ENCODE measurements at regions of chr7 and their contacts with region 1.

Region 1: GRCh38 chr7:57651006-57651405 is 201.0 kb downstream of the ZNF716 start:
- DNase-seq: no peak
- ATAC-seq: no peak
- H3K4me3 ChIP-seq: no peak overlapping the region
- H3K27ac ChIP-seq: no peak overlapping the region
- H3K4me1 ChIP-seq: no peaks in the 10 kb centered on the region
- H3K27me3 ChIP-seq: no peaks in the 10 kb centered on the region
- CTCF ChIP-seq: no peak
- POLR2A ChIP-seq: no peak
- RAD21 ChIP-seq: no peak

Region 2: DNA sequence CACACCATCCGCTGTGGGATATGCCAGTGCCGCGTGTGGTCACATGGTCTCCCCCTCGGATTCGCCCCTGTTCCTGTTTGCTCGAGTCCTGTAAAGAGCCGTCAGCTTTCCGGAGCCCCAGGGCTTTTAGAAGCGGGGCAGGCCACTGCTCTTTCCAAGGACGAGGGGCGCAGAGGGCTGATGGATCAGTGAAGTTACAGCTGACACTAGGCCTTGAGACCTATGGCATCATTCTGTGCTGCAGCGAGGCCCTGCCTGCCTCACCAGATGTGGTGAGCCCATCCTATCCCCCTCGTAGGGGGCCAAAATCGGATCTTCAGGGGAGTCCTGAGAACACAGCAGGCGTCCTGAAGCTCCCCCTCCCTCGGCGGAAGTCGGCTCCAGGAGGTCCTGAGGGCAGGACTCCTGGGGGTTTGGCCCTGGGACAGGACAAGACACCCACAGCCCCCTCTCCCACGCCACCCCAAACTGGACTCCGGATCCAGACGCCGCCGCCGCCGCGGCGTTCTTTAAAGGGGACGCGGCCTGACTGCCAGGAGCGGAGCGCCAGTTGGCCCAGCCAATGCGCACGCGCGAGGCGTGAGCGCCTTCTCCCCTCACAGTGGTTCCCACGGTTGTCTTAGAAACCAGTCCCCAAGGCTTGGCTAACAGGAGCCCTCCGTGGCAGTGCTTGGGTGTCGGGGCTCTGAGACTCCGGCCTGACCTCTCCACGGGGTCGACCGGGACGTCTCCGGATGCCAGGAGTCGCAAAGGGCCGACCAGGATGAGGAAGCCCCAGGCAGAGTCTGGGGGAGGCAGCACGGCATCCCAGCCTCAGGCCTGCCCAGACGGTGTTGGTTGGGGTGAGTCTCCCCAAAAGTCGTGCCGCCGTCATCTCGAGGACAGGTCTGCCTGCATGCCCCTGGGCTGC is 170.7 kb after region 1 on chr7:
- CTCF ChIA-PET with region 1: no interaction called
- POLR2A ChIA-PET with region 1: no interaction called
- dilution Hi-C with region 1: no loop called
- in situ Hi-C with region 1: loop called (anchors 25 kb)
- intact Hi-C with region 1: no loop called
- DNase-seq: no peak
- ATAC-seq: no peak
- H3K4me3 ChIP-seq: no peak overlapping the region
- H3K27ac ChIP-seq: no peak overlapping the region
- H3K4me1 ChIP-seq: no peaks in the 10 kb centered on the region
- H3K27me3 ChIP-seq: no peaks in the 10 kb centered on the region
- CTCF ChIP-seq: no peak
- POLR2A ChIP-seq: no peak
- RAD21 ChIP-seq: no peak